HCT116 (cell line): ENCODE measurements at regions of chr11 and their contacts with region 1.

Region 1: GRCh38 chr11:134223836-134224709 is at the starts of genes NCAPD3 and VPS26B:
- DNase-seq: peak; percentile 88
- ATAC-seq: peak; percentile 86
- H3K4me3 ChIP-seq: peak within 1 kb of the TSS; percentile 79 to 90
- H3K27ac ChIP-seq: peak within 1 kb of the TSS; percentile 61
- H3K4me1 ChIP-seq: peaks cover 10 to 20% of the 10 kb centered on the region in 2 experiments
- H3K27me3 ChIP-seq: no peaks in the 10 kb centered on the region
- CTCF ChIP-seq: no peak
- POLR2A ChIP-seq: peak; percentile 93
- RAD21 ChIP-seq: no peak
- total RNA-seq, gene NCAPD3: 71.0 TPM
- total RNA-seq, gene VPS26B: 26.6 TPM

Region 2: GRCh38 chr11:134033696-134034491 is 190.2 kb before region 1 on chr11:
- CTCF ChIA-PET with region 1: no interaction called
- POLR2A ChIA-PET with region 1: no interaction called
- RAD21 ChIA-PET with region 1: no interaction called
- intact Hi-C with region 1: loop called (anchors 10 kb)
- DNase-seq: peak; percentile 21
- ATAC-seq: peak; percentile 78
- H3K4me3 ChIP-seq: no peak overlapping the region
- H3K27ac ChIP-seq: no peak overlapping the region
- H3K4me1 ChIP-seq: peaks cover 4 to 10% of the 10 kb centered on the region in 2 experiments; a peak in 2 of 4 replicates
- H3K27me3 ChIP-seq: peaks cover 19% of the 10 kb centered on the region
- CTCF ChIP-seq: no peak
- POLR2A ChIP-seq: no peak
- RAD21 ChIP-seq: no peak

Region 3: DNA sequence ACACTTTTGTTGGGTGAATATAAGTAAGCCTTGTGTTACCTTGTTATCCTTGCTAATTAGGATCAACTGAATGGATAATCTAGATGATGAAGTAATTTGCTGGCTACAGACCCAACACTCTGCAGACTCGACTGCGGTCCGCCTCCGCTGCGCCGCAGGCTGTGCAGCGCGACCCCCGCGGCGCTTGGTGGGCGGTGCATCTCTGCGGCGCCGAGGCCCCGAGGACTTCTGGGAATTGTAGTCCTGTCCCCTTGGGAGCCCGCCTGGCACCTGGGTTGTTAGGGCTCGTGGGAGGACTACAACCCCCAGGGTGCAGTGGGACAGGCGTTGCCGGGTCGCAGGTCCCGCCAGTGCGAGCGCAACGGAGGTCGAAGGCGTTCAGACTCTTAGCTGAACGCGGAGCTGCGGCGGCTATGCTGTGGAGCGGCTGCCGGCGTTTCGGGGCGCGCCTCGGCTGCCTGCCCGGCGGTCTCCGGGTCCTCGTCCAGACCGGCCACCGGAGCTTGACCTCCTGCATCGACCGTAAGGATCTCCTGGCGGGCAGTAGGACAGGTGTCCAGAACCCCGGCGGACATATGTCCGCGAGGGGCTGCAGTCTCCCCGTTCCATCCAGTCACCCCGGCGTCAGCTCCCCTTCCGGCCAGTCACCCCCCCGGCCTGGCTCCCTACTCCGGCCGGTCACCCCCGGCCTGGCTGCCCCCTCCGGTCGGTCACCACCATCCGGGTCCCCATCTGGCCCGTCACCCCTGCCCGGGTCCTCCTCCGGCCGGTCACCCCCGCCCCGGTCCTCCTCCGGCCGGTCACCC is 29.3 kb after region 1 on chr11 and contains the starts of genes ACAD8 and THYN1:
- CTCF ChIA-PET with region 1: no interaction called
- POLR2A ChIA-PET with region 1: interaction called, 4 read pairs
- RAD21 ChIA-PET with region 1: interaction called in 1 of 2 experiments, 6 read pairs
- intact Hi-C with region 1: loop called (anchors 2 kb)
- DNase-seq: peak; percentile 90
- ATAC-seq: peak; percentile 99
- H3K4me3 ChIP-seq: peak within 1 kb of the TSS; percentile 73 to 79
- H3K27ac ChIP-seq: peak within 1 kb of the TSS; percentile 47; the same call in 1 of the 2 replicates
- H3K4me1 ChIP-seq: peaks cover 2 to 9% of the 10 kb centered on the region in 2 experiments; a peak in 2 of 4 replicates
- H3K27me3 ChIP-seq: no peaks in the 10 kb centered on the region
- CTCF ChIP-seq: no peak
- POLR2A ChIP-seq: peak; percentile 86
- RAD21 ChIP-seq: no peak
- total RNA-seq, gene ACAD8: 21.0 TPM
- total RNA-seq, gene THYN1: 32.2 TPM

Region 4: DNA sequence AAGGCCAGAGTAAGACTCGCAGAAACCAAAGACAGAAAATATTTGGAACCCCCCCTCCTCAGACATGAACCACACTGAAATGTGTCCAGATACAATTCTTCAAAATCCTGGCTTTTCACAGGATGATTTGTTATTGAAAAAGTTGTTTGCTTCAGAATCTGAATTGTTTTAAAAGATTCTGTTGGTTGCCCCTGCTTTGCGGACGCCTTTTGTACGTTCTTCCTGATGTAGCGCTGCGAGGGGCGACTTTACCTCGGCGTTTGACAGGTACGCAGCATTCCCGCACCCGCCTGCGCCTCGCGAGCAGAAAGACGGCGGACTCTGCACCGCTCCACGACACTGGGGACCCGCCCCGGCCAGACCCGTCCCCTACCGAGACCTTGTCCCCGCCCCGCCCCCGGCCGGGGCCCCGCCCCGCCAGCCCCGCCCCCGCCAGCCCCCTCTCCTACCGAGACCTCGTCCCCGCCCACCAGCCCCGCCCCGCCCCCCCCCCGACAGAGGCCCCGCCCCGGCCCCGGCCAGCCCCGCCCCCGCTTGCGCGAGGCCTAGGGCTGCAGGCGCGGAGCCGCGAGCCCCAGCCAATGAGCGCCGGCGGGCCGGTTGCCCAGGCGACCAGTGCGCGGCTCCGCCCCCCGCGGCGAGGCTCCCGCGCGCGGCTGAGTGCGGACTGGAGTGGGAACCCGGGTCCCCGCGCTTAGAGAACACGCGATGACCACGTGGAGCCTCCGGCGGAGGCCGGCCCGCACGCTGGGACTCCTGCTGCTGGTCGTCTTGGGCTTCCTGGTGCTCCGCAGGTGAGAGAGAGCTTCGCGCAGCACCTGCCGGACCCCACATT is 107.5 kb after region 1 on chr11 and contains the start of gene GLB1L2:
- CTCF ChIA-PET with region 1: no interaction called
- POLR2A ChIA-PET with region 1: no interaction called
- RAD21 ChIA-PET with region 1: no interaction called
- intact Hi-C with region 1: loop called (anchors 2 kb)
- DNase-seq: peak; percentile 45
- ATAC-seq: peak; percentile 90
- H3K4me3 ChIP-seq: peak within 1 kb of the TSS; percentile 67 to 71
- H3K27ac ChIP-seq: peak within 1 kb of the TSS; percentile 14; the same call in 1 of the 2 replicates
- H3K4me1 ChIP-seq: peaks cover 17 to 38% of the 10 kb centered on the region in 2 experiments; a peak in 3 of 4 replicates
- H3K27me3 ChIP-seq: no peaks in the 10 kb centered on the region
- CTCF ChIP-seq: no peak
- POLR2A ChIP-seq: no peak
- RAD21 ChIP-seq: no peak
- total RNA-seq, gene GLB1L2: 27.1 TPM

Region 5: DNA sequence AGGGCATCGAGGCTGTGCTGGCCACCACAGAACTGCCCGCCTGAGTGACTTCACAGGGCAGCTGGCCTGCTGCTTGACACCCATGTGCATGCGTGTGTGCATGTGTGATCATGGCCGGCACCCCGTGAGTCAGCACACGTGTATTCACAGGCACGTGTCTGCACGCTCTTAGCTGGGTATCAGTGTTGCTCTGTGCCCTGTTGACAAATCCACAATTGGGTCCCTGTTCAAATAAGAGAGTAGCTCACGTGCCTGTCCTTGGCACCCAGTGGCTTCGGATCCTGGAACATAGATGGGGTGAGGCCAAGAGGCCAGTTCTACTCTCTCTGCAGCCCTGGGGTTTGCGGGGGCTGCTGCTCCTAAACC is 174.0 kb after region 1 on chr11:
- CTCF ChIA-PET with region 1: no interaction called
- POLR2A ChIA-PET with region 1: no interaction called
- RAD21 ChIA-PET with region 1: no interaction called
- intact Hi-C with region 1: no loop called
- DNase-seq: no peak
- ATAC-seq: no peak
- H3K4me3 ChIP-seq: no peak overlapping the region
- H3K27ac ChIP-seq: no peak overlapping the region
- H3K4me1 ChIP-seq: peaks cover 0 to 7% of the 10 kb centered on the region in 2 experiments; a peak in 2 of 4 replicates
- H3K27me3 ChIP-seq: peaks cover 6% of the 10 kb centered on the region; the same call in 1 of the 2 replicates
- CTCF ChIP-seq: no peak
- POLR2A ChIP-seq: no peak
- RAD21 ChIP-seq: no peak